T-cell (primary cell): ENCODE measurements at regions of chr2 and their contacts with region 1.

Region 1: DNA sequence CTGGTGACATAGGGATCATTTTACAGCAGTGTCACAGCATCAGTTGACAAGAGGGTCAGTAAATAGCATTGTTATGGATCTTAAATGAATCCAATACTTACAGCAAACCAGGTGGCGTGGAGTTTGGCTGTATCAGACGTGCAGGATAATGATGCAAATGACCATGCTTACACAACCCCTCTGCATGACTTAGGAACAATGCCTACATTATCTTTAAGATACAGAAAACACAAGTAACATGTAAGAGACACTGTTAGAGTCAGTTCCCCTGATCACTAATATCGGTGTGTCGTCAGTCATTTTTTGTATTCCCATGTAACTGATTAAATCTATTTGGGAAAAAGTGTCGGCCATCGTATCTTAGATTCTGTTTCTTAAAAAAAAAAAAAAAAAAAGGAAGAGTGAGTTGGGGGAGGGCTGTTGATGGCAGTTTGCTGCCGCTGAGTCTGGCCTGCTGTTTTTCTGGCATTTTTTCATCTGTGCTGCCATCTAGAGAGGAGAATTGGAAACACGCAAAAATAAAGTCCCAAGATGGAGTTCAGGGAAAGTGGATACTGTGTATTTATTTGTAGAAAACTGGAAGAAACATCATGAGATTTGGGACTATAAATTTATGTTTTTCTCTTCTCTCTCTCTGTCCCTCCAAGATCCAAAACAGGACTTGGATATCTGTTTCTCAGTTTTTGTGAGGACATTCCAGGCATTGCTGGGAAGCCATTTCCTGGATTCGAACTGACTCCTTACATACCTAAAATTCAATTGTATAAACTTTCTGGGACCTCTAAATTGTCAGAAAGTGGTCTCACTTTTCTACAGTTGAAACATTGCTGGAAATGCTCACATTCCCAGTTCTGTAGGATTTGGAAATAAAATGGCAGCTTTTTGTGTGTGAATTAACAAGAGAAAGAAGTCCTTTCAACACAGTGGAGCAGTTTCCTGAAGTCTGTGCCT is 60.3 kb upstream of the AGPS start:
- DNase-seq: peak in 30 of 35 experiments; percentile 8 to 79 (median 23)
- ATAC-seq: peak; percentile 77 to 86 (median 79)
- H3K4me3 ChIP-seq: no peak overlapping the region
- H3K4me3 Mint-ChIP-seq: peak overlapping the region in 1 of 3 donors; percentile 13
- H3K27ac ChIP-seq: no peak overlapping the region
- H3K27ac Mint-ChIP-seq: peak overlapping the region in 1 of 2 donors; percentile 73
- H3K4me1 ChIP-seq: peaks cover 2 to 5% of the 10 kb centered on the region in 2 experiments
- H3K4me1 Mint-ChIP-seq: peaks cover 12 to 20% (median 17%) of the 10 kb centered on the region in 3 donors
- H3K27me3 ChIP-seq: no peaks in the 10 kb centered on the region
- H3K27me3 Mint-ChIP-seq: no peaks in the 10 kb centered on the region

Region 2: GRCh38 chr2:177413703-177414102 is 81.4 kb after region 1 on chr2:
- CTCF ChIA-PET with region 1: interaction called, 9 to 52 read pairs
- POLR2A ChIA-PET with region 1: interaction called in 1 of 2 experiments, 5 read pairs
- DNase-seq: no peak
- ATAC-seq: no peak
- H3K4me3 ChIP-seq: no peak overlapping the region
- H3K4me3 Mint-ChIP-seq: no peak overlapping the region
- H3K27ac ChIP-seq: no peak overlapping the region
- H3K27ac Mint-ChIP-seq: peak overlapping the region in 1 of 2 donors; percentile 58
- H3K4me1 ChIP-seq: no peaks in the 10 kb centered on the region
- H3K4me1 Mint-ChIP-seq: peaks cover 37 to 42% (median 38%) of the 10 kb centered on the region in 3 donors
- H3K27me3 ChIP-seq: no peaks in the 10 kb centered on the region
- H3K27me3 Mint-ChIP-seq: no peaks in the 10 kb centered on the region

Region 3: DNA sequence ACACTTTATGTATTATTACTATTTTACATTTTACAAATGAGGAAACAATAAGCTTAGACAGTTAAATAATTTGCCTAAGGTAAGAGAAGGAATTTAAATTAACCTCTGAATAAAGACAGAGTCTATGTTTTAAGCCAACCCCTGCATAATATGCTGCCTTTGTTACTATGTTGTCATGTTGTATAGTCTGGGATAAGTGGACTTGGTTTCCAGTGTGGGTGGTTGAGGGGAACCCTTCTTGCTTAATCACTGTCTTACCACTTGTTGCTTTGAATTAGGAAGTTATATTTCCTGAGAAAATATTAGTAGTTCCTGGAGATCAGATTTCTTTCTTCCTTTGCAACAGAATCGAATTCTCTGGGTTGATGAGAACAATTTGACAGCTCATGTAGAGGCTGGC is 112.9 kb after region 1 on chr2:
- CTCF ChIA-PET with region 1: no interaction called
- POLR2A ChIA-PET with region 1: no interaction called
- DNase-seq: no peak
- ATAC-seq: no peak
- H3K4me3 ChIP-seq: no peak overlapping the region
- H3K4me3 Mint-ChIP-seq: no peak overlapping the region
- H3K27ac ChIP-seq: no peak overlapping the region
- H3K27ac Mint-ChIP-seq: no peak overlapping the region
- H3K4me1 ChIP-seq: no peaks in the 10 kb centered on the region
- H3K4me1 Mint-ChIP-seq: no peaks in the 10 kb centered on the region
- H3K27me3 ChIP-seq: no peaks in the 10 kb centered on the region
- H3K27me3 Mint-ChIP-seq: no peaks in the 10 kb centered on the region